Aorta (tissue), 5 donors: ENCODE measurements at regions of chr21 and their contacts with region 1.

Region 1: GRCh38 chr21:36589355-36589971 is 109.5 kb upstream of the SIM2 start:
- DNase-seq: peak; percentile 55 to 84
- ATAC-seq: no peak
- H3K4me3 ChIP-seq: no peak overlapping the region
- H3K27ac ChIP-seq: no peak overlapping the region
- H3K4me1 ChIP-seq: no peaks in the 10 kb centered on the region
- H3K27me3 ChIP-seq: no peaks in the 10 kb centered on the region

Region 2: GRCh38 chr21:36419996-36420395 is 169.5 kb before region 1 on chr21:
- intact Hi-C with region 1: loop called in 1 of 2 experiments (anchors 2 kb)
- DNase-seq: peak; percentile 91
- ATAC-seq: peak; percentile 83
- H3K4me3 ChIP-seq: no peak overlapping the region
- H3K27ac ChIP-seq: no peak overlapping the region
- H3K4me1 ChIP-seq: no peaks in the 10 kb centered on the region
- H3K27me3 ChIP-seq: no peaks in the 10 kb centered on the region